Mammary epithelial cell (primary cell): ENCODE measurements at regions of chr3 and their contacts with region 1.

Region 1: GRCh38 chr3:154334973-154335420 is 10.7 kb upstream of the DHX36 start:
- DNase-seq: peak; percentile 28
- H3K4me3 ChIP-seq: no peak overlapping the region
- H3K27ac ChIP-seq: no peak overlapping the region
- H3K4me1 ChIP-seq: no peaks in the 10 kb centered on the region
- H3K27me3 ChIP-seq: no peaks in the 10 kb centered on the region
- CTCF ChIP-seq: peak; percentile 41 to 60

Region 2: GRCh38 chr3:154718053-154718452 is 383.1 kb after region 1 on chr3:
- CTCF ChIA-PET with region 1: no interaction called
- dilution Hi-C with region 1: no loop called
- in situ Hi-C with region 1: loop called in 1 of 2 experiments (anchors 25 kb)
- intact Hi-C with region 1: no loop called
- DNase-seq: no peak
- H3K4me3 ChIP-seq: no peak overlapping the region
- H3K27ac ChIP-seq: no peak overlapping the region
- H3K4me1 ChIP-seq: no peaks in the 10 kb centered on the region
- H3K27me3 ChIP-seq: peaks cover under 1% of the 10 kb centered on the region
- CTCF ChIP-seq: no peak

Region 3: DNA sequence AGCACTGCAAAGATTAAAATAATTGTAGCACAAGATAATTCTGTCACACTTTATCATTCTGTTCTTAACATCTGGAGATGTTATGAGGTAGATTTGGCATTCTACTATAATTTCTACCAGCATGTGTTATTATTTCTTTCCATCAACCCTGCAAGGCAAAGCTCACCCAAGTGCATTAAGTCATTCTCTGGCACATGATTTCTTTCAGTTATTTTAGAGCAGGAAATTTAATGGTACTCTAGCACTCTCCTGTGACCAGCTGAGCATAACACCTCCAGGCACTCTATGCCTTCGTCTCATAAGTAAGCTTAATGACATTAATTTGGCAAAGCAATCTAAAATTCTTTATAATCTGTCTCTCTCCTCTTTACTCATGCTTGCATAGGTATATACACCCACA is 395.2 kb after region 1 on chr3:
- CTCF ChIA-PET with region 1: no interaction called
- dilution Hi-C with region 1: no loop called
- in situ Hi-C with region 1: loop called in 1 of 2 experiments (anchors 25 kb)
- intact Hi-C with region 1: no loop called
- DNase-seq: no peak
- H3K4me3 ChIP-seq: no peak overlapping the region
- H3K27ac ChIP-seq: no peak overlapping the region
- H3K4me1 ChIP-seq: no peaks in the 10 kb centered on the region
- H3K27me3 ChIP-seq: no peaks in the 10 kb centered on the region
- CTCF ChIP-seq: peak; percentile 3 to 31

Region 4: DNA sequence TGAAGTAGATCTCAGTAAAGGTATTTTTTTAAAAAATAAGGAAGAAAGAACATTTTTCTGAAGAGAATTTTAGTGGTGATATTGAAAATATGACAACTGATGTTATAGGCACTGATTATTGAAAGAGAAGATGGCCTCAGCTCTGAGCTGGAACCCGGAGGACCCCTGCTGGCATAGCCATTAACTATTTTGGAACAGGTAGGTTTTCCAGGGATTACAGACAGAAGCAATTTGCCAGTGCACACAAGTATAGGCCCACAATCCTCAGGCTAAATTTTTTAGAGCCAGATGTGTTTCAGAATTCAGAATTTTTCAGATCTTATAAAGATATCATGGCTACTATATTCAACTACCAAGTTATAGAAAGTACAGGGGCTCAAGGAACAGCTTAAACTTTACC is 411.0 kb after region 1 on chr3:
- CTCF ChIA-PET with region 1: no interaction called
- dilution Hi-C with region 1: no loop called
- in situ Hi-C with region 1: loop called in 1 of 2 experiments (anchors 25 kb)
- intact Hi-C with region 1: loop called (anchors 1 kb)
- DNase-seq: no peak
- H3K4me3 ChIP-seq: no peak overlapping the region
- H3K27ac ChIP-seq: no peak overlapping the region
- H3K4me1 ChIP-seq: no peaks in the 10 kb centered on the region
- H3K27me3 ChIP-seq: no peaks in the 10 kb centered on the region
- CTCF ChIP-seq: peak in 1 of 2 donors; percentile 45

Region 5: GRCh38 chr3:154939334-154939733 is 604.3 kb after region 1 on chr3:
- CTCF ChIA-PET with region 1: no interaction called
- dilution Hi-C with region 1: no loop called
- in situ Hi-C with region 1: no loop called
- intact Hi-C with region 1: loop called (anchors 10 kb)
- DNase-seq: no peak
- H3K4me3 ChIP-seq: no peak overlapping the region
- H3K27ac ChIP-seq: no peak overlapping the region
- H3K4me1 ChIP-seq: no peaks in the 10 kb centered on the region
- H3K27me3 ChIP-seq: no peaks in the 10 kb centered on the region
- CTCF ChIP-seq: peak in 1 of 2 donors; percentile 21

Region 6: GRCh38 chr3:155323063-155323666 is 988.2 kb after region 1 on chr3:
- CTCF ChIA-PET with region 1: no interaction called
- dilution Hi-C with region 1: no loop called
- in situ Hi-C with region 1: loop called (anchors 25 kb)
- intact Hi-C with region 1: loop called (anchors 10 kb)
- DNase-seq: peak; percentile 51
- H3K4me3 ChIP-seq: no peak overlapping the region
- H3K27ac ChIP-seq: no peak overlapping the region
- H3K4me1 ChIP-seq: no peaks in the 10 kb centered on the region
- H3K27me3 ChIP-seq: no peaks in the 10 kb centered on the region
- CTCF ChIP-seq: peak; percentile 72 to 78

Region 7: DNA sequence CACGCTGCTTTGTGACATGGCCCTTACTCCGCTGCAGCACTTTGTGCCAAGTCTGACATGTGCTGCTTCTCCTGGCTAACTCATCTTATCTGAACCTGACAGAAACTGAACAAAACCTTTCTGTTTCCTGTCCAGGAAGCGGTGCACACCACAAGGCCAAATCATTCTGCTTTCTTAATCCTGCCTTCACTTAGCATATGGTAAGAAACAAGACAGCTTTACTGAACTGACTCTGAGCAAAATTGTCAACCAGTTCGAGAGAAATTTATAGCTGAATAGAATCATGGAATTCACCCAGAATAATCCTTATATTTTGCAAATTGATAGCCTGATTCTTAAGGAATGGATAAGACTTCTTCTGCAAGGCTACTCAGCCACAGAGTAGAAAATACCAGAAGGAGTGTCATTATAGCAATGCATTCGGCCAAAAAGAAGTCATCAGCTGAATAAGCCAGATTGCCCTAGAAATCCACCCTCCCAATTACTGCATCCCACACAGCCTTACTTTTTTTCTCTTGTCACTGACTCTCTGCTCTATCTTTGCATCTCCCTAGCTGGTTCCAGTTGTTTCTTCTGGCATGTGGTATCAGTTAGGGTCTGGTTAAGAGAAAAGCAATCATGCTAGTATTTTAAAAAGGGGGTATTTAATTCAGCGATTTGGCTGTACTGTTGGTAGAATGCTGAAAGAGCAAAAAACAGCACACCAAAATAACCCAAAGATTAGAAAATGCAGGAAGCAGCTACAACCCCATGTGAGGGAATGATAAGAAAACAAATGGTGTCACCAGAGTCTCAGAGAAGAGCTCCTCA is 1000.1 kb after region 1 on chr3:
- CTCF ChIA-PET with region 1: no interaction called
- dilution Hi-C with region 1: no loop called
- in situ Hi-C with region 1: loop called in 1 of 2 experiments (anchors 25 kb)
- intact Hi-C with region 1: no loop called
- DNase-seq: no peak
- H3K4me3 ChIP-seq: no peak overlapping the region
- H3K27ac ChIP-seq: no peak overlapping the region
- H3K4me1 ChIP-seq: no peaks in the 10 kb centered on the region
- H3K27me3 ChIP-seq: no peaks in the 10 kb centered on the region
- CTCF ChIP-seq: no peak